A673 (cell line): ENCODE measurements at regions of chr12 and their contacts with region 1.

Region 1: GRCh38 chr12:103571286-103571685 is 15.8 kb upstream of the STAB2 start:
- DNase-seq: peak; percentile 2
- H3K4me3 ChIP-seq: no peak overlapping the region
- H3K27ac ChIP-seq: no peak overlapping the region
- H3K4me1 ChIP-seq: no peaks in the 10 kb centered on the region
- H3K27me3 ChIP-seq: peaks cover 69% of the 10 kb centered on the region
- CTCF ChIP-seq: no peak

Region 2: GRCh38 chr12:103548622-103549601 is 22.4 kb before region 1 on chr12:
- CTCF ChIA-PET with region 1: no interaction called
- POLR2A ChIA-PET with region 1: no interaction called
- intact Hi-C with region 1: no loop called
- DNase-seq: peak; percentile 75
- H3K4me3 ChIP-seq: no peak overlapping the region
- H3K27ac ChIP-seq: no peak overlapping the region
- H3K4me1 ChIP-seq: no peaks in the 10 kb centered on the region
- H3K27me3 ChIP-seq: peaks cover 54% of the 10 kb centered on the region
- CTCF ChIP-seq: peak; percentile 84

Region 3: GRCh38 chr12:103632554-103633216 is 61.4 kb after region 1 on chr12:
- CTCF ChIA-PET with region 1: interaction called, 11 read pairs
- POLR2A ChIA-PET with region 1: no interaction called
- intact Hi-C with region 1: loop called (anchors 1 kb)
- DNase-seq: peak; percentile 86
- H3K4me3 ChIP-seq: no peak overlapping the region
- H3K27ac ChIP-seq: no peak overlapping the region
- H3K4me1 ChIP-seq: no peaks in the 10 kb centered on the region
- H3K27me3 ChIP-seq: peaks cover 26% of the 10 kb centered on the region
- CTCF ChIP-seq: peak; percentile 100

Region 4: GRCh38 chr12:103868215-103868614 is 296.9 kb after region 1 on chr12:
- CTCF ChIA-PET with region 1: interaction called, 3 read pairs
- POLR2A ChIA-PET with region 1: no interaction called
- intact Hi-C with region 1: loop called (anchors 2 kb)
- DNase-seq: no peak
- H3K4me3 ChIP-seq: no peak overlapping the region
- H3K27ac ChIP-seq: no peak overlapping the region
- H3K4me1 ChIP-seq: no peaks in the 10 kb centered on the region
- H3K27me3 ChIP-seq: peaks cover 3% of the 10 kb centered on the region
- CTCF ChIP-seq: no peak